T-cell (primary cell): ENCODE measurements at regions of chr13 and their contacts with region 1.

Region 1: GRCh38 chr13:24671386-24672107 is 8.7 kb upstream of the ATP12A start:
- DNase-seq: peak in 1 of 35 experiments; percentile 52
- ATAC-seq: peak in 2 of 4 experiments; percentile 43 to 52
- H3K4me3 ChIP-seq: no peak overlapping the region
- H3K4me3 Mint-ChIP-seq: peak overlapping the region in 1 of 3 donors; percentile 33
- H3K27ac ChIP-seq: no peak overlapping the region
- H3K27ac Mint-ChIP-seq: no peak overlapping the region
- H3K4me1 ChIP-seq: peaks cover 0 to 11% of the 10 kb centered on the region in 2 experiments
- H3K4me1 Mint-ChIP-seq: peaks cover 8 to 14% (median 9%) of the 10 kb centered on the region in 3 donors
- H3K27me3 ChIP-seq: peaks cover 0 to 28% of the 10 kb centered on the region in 2 experiments
- H3K27me3 Mint-ChIP-seq: peaks cover 8 to 19% of the 10 kb centered on the region in 2 donors

Region 2: DNA sequence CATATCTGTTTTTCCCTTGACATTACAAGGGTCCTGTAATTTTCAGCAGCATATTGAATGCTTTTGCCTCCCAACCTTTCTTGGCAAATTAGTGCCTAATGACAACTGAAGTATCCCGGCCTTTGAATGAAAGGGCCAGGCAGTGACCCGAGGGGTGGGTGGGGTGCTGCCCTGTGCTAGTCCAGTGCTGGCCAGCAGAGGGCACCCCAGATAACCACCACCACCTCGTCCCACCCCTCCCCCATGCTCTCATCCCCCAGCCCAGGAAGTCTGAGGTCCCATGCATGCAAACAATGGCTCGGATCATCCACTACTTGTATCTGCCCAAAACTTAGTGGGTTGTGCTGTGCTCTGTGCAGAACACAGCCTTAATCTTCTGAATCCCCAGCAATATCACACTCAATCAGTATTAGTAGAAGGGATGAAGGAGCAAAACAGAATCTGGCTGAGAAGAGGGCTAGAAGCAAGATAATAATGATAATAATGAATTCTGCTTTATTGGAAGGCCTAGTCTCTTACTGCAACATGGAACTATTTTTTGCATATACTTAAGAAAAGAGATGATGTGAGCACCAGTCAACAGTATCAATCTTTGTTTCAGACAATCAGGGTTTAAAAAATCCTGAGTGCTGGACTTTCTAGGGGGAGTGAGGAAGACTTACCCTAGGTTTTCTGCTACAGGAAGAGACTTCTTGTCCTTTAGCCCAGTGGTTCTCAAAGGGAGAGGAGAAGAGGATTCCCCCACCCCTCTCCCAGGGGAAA is 12.5 kb after region 1 on chr13:
- CTCF ChIA-PET with region 1: interaction called in 1 of 2 experiments, 11 read pairs
- POLR2A ChIA-PET with region 1: no interaction called
- DNase-seq: peak in 34 of 35 experiments; percentile 9 to 74 (median 50)
- ATAC-seq: peak; percentile 60 to 83 (median 82)
- H3K4me3 ChIP-seq: no peak overlapping the region
- H3K4me3 Mint-ChIP-seq: peak overlapping the region in 1 of 3 donors; percentile 61
- H3K27ac ChIP-seq: no peak overlapping the region
- H3K27ac Mint-ChIP-seq: peak overlapping the region; percentile 12 to 23
- H3K4me1 ChIP-seq: peaks cover 14 to 37% of the 10 kb centered on the region in 2 experiments
- H3K4me1 Mint-ChIP-seq: peaks cover 31 to 37% (median 34%) of the 10 kb centered on the region in 3 donors
- H3K27me3 ChIP-seq: peaks cover 0 to 54% of the 10 kb centered on the region in 2 experiments
- H3K27me3 Mint-ChIP-seq: peaks cover 21 to 41% of the 10 kb centered on the region in 2 donors

Region 3: DNA sequence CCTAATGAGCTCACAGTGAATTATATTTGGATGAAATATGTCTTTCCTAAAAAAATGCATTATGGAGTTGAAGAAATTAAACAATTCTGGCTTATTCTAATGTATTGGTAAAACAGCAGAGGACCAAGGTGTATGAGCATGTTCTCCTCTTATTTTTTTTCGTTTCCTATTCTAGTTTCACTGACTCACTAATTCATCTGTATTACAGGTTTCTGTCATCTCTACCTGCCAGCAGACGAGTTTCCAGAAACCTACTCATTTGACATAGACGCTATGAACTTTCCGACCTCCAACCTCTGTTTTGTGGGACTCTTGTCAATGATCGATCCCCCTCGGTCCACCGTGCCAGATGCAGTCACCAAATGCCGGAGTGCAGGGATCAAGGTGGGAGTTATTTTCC is 29.0 kb after region 1 on chr13:
- CTCF ChIA-PET with region 1: interaction called in 1 of 2 experiments, 5 read pairs
- POLR2A ChIA-PET with region 1: interaction called in 1 of 2 experiments, 19 read pairs
- DNase-seq: no peak
- ATAC-seq: no peak
- H3K4me3 ChIP-seq: no peak overlapping the region
- H3K4me3 Mint-ChIP-seq: no peak overlapping the region
- H3K27ac ChIP-seq: no peak overlapping the region
- H3K27ac Mint-ChIP-seq: no peak overlapping the region
- H3K4me1 ChIP-seq: no peaks in the 10 kb centered on the region
- H3K4me1 Mint-ChIP-seq: no peaks in the 10 kb centered on the region
- H3K27me3 ChIP-seq: peaks cover 0 to 11% of the 10 kb centered on the region in 2 experiments
- H3K27me3 Mint-ChIP-seq: peaks cover 19 to 34% of the 10 kb centered on the region in 2 donors

Region 4: DNA sequence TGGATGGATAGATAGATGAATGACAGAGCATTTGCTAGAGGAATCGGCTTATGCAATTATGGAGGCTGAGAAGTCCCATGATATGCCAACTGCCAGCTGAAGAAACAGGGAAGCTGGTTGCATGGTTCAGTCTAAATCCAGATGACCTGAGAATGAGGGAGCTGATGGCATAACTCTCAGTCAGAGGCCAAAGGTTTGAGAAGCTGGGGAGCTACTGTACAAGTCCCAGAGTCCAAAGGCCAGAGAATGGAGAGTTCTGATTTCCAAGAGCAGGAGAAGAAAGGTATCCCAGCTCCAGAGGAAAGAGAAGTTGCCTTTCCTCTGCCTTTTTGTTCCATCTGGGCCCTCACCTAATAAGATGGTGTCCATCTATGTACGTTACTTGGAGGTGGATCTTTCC is 1690.7 kb after region 1 on chr13:
- CTCF ChIA-PET with region 1: no interaction called
- POLR2A ChIA-PET with region 1: no interaction called
- DNase-seq: no peak
- ATAC-seq: no peak
- H3K4me3 ChIP-seq: no peak overlapping the region
- H3K4me3 Mint-ChIP-seq: no peak overlapping the region
- H3K27ac ChIP-seq: no peak overlapping the region
- H3K27ac Mint-ChIP-seq: no peak overlapping the region
- H3K4me1 ChIP-seq: no peaks in the 10 kb centered on the region
- H3K4me1 Mint-ChIP-seq: no peaks in the 10 kb centered on the region
- H3K27me3 ChIP-seq: no peaks in the 10 kb centered on the region
- H3K27me3 Mint-ChIP-seq: no peaks in the 10 kb centered on the region